Thyroid gland (tissue), 4 donors: ENCODE measurements at regions of chr7 and their contacts with region 1.

Region 1: GRCh38 chr7:138981332-138982203 is at the start of gene KIAA1549:
- DNase-seq: peak; percentile 69 to 73
- H3K4me3 ChIP-seq: peak within 1 kb of the TSS; percentile 32 to 58 (median 54)
- H3K27ac ChIP-seq: no peak within 1 kb of the TSS
- H3K4me1 ChIP-seq: peaks cover 17 to 28% of the 10 kb centered on the region in 2 donors
- H3K27me3 ChIP-seq: no peaks in the 10 kb centered on the region
- CTCF ChIP-seq: peak in 3 of 6 experiments; percentile 43 to 63 (median 56)
- POLR2A ChIP-seq: no peak
- total RNA-seq, gene KIAA1549: 1.2 to 3.9 (median 2.6) TPM

Region 2: GRCh38 chr7:138245682-138246081 is 735.9 kb before region 1 on chr7:
- intact Hi-C with region 1: no loop called
- DNase-seq: no peak
- H3K4me3 ChIP-seq: no peak overlapping the region
- H3K27ac ChIP-seq: no peak overlapping the region
- H3K4me1 ChIP-seq: no peaks in the 10 kb centered on the region
- H3K27me3 ChIP-seq: no peaks in the 10 kb centered on the region
- CTCF ChIP-seq: no peak
- POLR2A ChIP-seq: no peak

Region 3: GRCh38 chr7:138483531-138483930 is 498.0 kb before region 1 on chr7:
- intact Hi-C with region 1: no loop called
- DNase-seq: no peak
- H3K4me3 ChIP-seq: no peak overlapping the region
- H3K27ac ChIP-seq: no peak overlapping the region
- H3K4me1 ChIP-seq: peaks cover 0 to 4% of the 10 kb centered on the region in 2 donors
- H3K27me3 ChIP-seq: no peaks in the 10 kb centered on the region
- CTCF ChIP-seq: no peak
- POLR2A ChIP-seq: no peak

Region 4: GRCh38 chr7:138886501-138886917 is 95.1 kb before region 1 on chr7:
- intact Hi-C with region 1: loop called (anchors 5 kb)
- DNase-seq: peak; percentile 4 to 8
- H3K4me3 ChIP-seq: no peak overlapping the region
- H3K27ac ChIP-seq: no peak overlapping the region
- H3K4me1 ChIP-seq: no peaks in the 10 kb centered on the region
- H3K27me3 ChIP-seq: no peaks in the 10 kb centered on the region
- CTCF ChIP-seq: peak; percentile 25 to 86 (median 69)
- POLR2A ChIP-seq: no peak